ENCODE measurements at regions of chr16 and their contacts with region 1.

Region 1: GRCh38 chr16:58755989-58756649 is 22.0 kb upstream of the GOT2 start:
- DNase-seq: peak; percentile 52
- ATAC-seq: peak; percentile 99
- H3K4me3 Mint-ChIP-seq: peak overlapping the region; percentile 59
- H3K27ac Mint-ChIP-seq: peak overlapping the region; percentile 1
- H3K4me1 Mint-ChIP-seq: peaks cover 8% of the 10 kb centered on the region
- H3K27me3 Mint-ChIP-seq: no peaks in the 10 kb centered on the region
- CTCF ChIP-seq: no peak

Region 2: DNA sequence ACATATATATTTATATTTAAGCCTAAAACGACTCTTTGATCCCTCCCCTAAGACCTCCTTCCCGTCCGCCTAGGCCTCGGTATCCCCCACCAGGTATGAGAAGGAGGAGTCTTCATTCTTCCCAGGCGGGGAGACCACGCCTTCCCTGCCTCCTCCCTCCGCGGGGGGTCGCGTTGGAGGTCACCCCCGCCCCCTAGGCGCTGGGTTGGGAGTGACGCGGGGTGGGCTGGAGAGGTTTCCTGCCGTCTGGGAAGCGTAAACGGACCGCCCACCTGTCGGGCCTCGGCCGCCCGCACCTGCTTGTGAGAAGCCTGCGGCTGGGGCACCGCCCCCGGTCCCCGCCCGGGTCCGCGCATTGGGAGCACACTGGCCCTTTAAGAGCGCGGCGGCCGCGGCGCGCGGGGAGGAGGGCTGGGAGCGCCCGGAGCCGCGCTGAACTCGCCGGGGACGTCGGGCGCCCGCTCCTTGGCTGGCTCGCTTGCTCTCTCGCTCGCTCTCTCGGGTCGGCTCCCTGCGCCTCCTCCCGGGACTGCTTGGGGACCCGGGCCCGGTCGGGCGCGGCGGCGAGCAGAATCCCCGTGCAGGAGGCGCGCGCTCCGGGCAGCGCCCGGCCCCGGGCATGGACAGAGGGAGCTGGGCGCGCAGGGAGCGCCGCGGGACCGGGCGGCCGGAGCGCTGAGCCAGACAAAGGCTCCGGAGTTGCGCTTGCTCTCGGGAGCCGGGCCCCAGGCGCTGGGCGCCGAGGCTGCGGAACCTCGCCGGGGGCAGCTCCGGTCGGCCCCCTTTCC is 730.6 kb before region 1 on chr16 and contains the start of gene MMP15:
- CTCF ChIA-PET with region 1: no interaction called
- POLR2A ChIA-PET with region 1: no interaction called
- intact Hi-C with region 1: loop called (anchors 5 kb)
- DNase-seq: peak; percentile 47
- ATAC-seq: peak; percentile 69
- H3K4me3 Mint-ChIP-seq: peak within 1 kb of the TSS; percentile 84
- H3K27ac Mint-ChIP-seq: peak within 1 kb of the TSS; percentile 36
- H3K4me1 Mint-ChIP-seq: peaks cover 11% of the 10 kb centered on the region
- H3K27me3 Mint-ChIP-seq: peaks cover 23% of the 10 kb centered on the region
- CTCF ChIP-seq: no peak
- total RNA-seq, gene MMP15: 0.60 TPM in 1 of 2 replicates, not detected in the other

Region 3: GRCh38 chr16:58487566-58488351 is 268.4 kb before region 1 on chr16:
- CTCF ChIA-PET with region 1: interaction called, 4 read pairs
- POLR2A ChIA-PET with region 1: no interaction called
- intact Hi-C with region 1: loop called (anchors 1 kb)
- DNase-seq: peak; percentile 73
- ATAC-seq: peak; percentile 89
- H3K4me3 Mint-ChIP-seq: no peak overlapping the region
- H3K27ac Mint-ChIP-seq: no peak overlapping the region
- H3K4me1 Mint-ChIP-seq: no peaks in the 10 kb centered on the region
- H3K27me3 Mint-ChIP-seq: peaks cover 3% of the 10 kb centered on the region
- CTCF ChIP-seq: peak; percentile 76

Region 4: DNA sequence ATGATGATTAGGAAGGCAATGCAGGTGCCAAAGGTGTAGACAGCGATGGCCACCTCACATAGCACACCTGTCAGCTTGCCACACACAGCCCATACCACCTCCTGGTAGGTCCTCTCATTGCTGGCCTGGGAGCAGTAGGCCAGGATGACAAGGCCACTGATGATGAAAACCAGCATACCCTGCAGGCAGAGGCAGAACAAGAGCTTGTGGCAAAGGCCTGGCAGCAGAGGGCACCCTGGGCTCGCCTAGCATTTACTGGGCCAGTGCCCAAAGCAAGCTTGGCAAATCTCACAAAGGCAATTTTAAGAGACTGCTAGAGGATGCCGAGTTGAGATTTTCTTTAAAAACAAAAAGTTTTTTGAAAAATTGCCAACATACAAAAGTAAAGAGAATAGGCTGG is 77.4 kb before region 1 on chr16:
- CTCF ChIA-PET with region 1: interaction called, 8 read pairs
- POLR2A ChIA-PET with region 1: no interaction called
- intact Hi-C with region 1: loop called (anchors 2 kb)
- DNase-seq: no peak
- ATAC-seq: no peak
- H3K4me3 Mint-ChIP-seq: no peak overlapping the region
- H3K27ac Mint-ChIP-seq: no peak overlapping the region
- H3K4me1 Mint-ChIP-seq: peaks cover 9% of the 10 kb centered on the region
- H3K27me3 Mint-ChIP-seq: no peaks in the 10 kb centered on the region
- CTCF ChIP-seq: no peak

Region 5: DNA sequence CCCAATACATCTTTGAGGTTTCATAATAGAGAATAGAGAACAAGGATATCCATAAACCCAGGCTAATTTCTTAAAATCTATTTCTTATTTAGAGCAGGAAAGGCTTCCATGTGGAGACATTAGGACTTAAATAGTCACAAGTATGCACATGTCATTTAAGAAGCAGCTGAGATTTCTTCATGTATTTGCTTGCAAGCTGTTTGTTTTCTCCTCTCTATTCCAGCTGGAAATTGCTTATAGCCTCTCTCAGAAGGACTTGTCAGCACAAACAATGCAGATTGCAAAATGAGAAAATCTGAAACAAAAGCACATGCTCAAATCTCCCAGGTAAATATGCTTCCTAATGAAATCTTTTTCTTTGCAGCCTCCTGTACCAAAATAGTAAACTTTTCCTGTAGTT is 1807.0 kb after region 1 on chr16:
- CTCF ChIA-PET with region 1: no interaction called
- POLR2A ChIA-PET with region 1: no interaction called
- intact Hi-C with region 1: no loop called
- DNase-seq: no peak
- ATAC-seq: no peak
- H3K4me3 Mint-ChIP-seq: no peak overlapping the region
- H3K27ac Mint-ChIP-seq: no peak overlapping the region
- H3K4me1 Mint-ChIP-seq: no peaks in the 10 kb centered on the region
- H3K27me3 Mint-ChIP-seq: no peaks in the 10 kb centered on the region
- CTCF ChIP-seq: no peak

Measured in activated B cell treated with CpG ODN at 0.5 μM for 24 hours (primary cell).